ENCODE measurements at regions of chrX and their contacts with region 1.

Region 1: GRCh38 chrX:16670998-16671397 is 21.0 kb downstream of the S100G start:
- DNase-seq: peak; percentile 56
- H3K4me3 ChIP-seq: no peak overlapping the region
- H3K27ac ChIP-seq: no peak overlapping the region
- H3K4me1 ChIP-seq: no peaks in the 10 kb centered on the region
- H3K27me3 ChIP-seq: no peaks in the 10 kb centered on the region
- CTCF ChIP-seq: peak in 1 of 2 donors; percentile 14
- POLR2A ChIP-seq: no peak

Region 2: DNA sequence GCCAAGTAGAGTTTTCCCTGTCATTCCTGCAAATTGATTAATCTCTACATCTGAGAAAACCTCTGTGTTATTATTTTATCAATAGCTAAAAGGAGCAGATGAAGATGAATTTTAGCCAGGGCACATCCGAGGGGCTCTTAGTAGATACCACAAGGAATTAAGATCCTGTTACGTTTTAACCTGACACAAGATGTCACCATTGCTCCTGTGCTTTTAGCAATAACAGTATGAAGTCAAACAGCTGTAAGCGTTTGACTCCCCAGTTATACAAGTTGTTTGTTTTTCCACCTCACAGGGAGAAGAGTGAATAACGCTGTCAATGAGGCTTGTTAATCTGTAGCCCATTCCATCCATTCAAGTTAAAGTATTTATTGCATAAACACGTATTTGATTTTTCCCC is 740.4 kb before region 1 on chrX:
- CTCF ChIA-PET with region 1: no interaction called
- POLR2A ChIA-PET with region 1: no interaction called
- dilution Hi-C with region 1: no loop called
- intact Hi-C with region 1: loop called (anchors 5 kb)
- DNase-seq: peak; percentile 36
- H3K4me3 ChIP-seq: no peak overlapping the region
- H3K27ac ChIP-seq: no peak overlapping the region
- H3K4me1 ChIP-seq: no peaks in the 10 kb centered on the region
- H3K27me3 ChIP-seq: peaks cover 0 to 3% of the 10 kb centered on the region in 2 experiments
- CTCF ChIP-seq: peak in 1 of 2 donors; percentile 4
- POLR2A ChIP-seq: no peak

Region 3: GRCh38 chrX:16123222-16123786 is 547.7 kb before region 1 on chrX and contains the start of gene GRPR:
- CTCF ChIA-PET with region 1: interaction called, 9 read pairs
- POLR2A ChIA-PET with region 1: no interaction called
- dilution Hi-C with region 1: no loop called
- intact Hi-C with region 1: loop called (anchors 2 kb)
- DNase-seq: peak; percentile 77
- H3K4me3 ChIP-seq: no peak within 1 kb of the TSS
- H3K27ac ChIP-seq: no peak within 1 kb of the TSS
- H3K4me1 ChIP-seq: no peaks in the 10 kb centered on the region
- H3K27me3 ChIP-seq: peaks cover 0 to 5% of the 10 kb centered on the region in 2 experiments
- CTCF ChIP-seq: peak; percentile 69 to 70
- POLR2A ChIP-seq: no peak
- total RNA-seq, gene GRPR: 0.28 TPM in 1 of 2 replicates, not detected in the other

Region 4: DNA sequence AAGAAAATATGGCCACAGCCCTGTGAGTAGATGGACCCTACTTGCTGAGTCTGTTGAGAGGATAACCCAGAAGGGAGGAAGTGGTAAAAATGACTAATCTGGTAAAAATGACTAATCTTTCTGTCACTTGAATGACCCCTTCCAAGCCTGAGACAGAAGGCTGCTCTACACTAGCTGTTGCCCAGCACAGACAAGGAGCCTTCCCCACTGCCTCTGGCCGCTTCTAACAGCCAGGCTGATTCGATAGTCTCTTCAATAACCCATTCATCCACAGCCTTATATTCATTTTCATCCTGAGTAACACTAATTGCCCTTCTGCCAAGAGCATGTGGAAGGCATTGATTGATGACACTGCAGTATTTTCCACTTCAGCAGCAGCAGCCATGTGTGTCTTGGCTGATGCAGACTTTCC is 485.3 kb before region 1 on chrX:
- CTCF ChIA-PET with region 1: no interaction called
- POLR2A ChIA-PET with region 1: no interaction called
- dilution Hi-C with region 1: no loop called
- intact Hi-C with region 1: loop called (anchors 10 kb)
- DNase-seq: peak; percentile 74
- H3K4me3 ChIP-seq: no peak overlapping the region
- H3K27ac ChIP-seq: no peak overlapping the region
- H3K4me1 ChIP-seq: peaks cover 31% of the 10 kb centered on the region
- H3K27me3 ChIP-seq: no peaks in the 10 kb centered on the region
- CTCF ChIP-seq: no peak
- POLR2A ChIP-seq: no peak

Region 5: GRCh38 chrX:16436348-16437188 is 234.4 kb before region 1 on chrX:
- CTCF ChIA-PET with region 1: interaction called, 38 read pairs
- POLR2A ChIA-PET with region 1: no interaction called
- dilution Hi-C with region 1: no loop called
- intact Hi-C with region 1: loop called (anchors 1 kb)
- DNase-seq: peak; percentile 54
- H3K4me3 ChIP-seq: no peak overlapping the region
- H3K27ac ChIP-seq: no peak overlapping the region
- H3K4me1 ChIP-seq: no peaks in the 10 kb centered on the region
- H3K27me3 ChIP-seq: no peaks in the 10 kb centered on the region
- CTCF ChIP-seq: peak; percentile 53 to 56
- POLR2A ChIP-seq: no peak

Region 6: DNA sequence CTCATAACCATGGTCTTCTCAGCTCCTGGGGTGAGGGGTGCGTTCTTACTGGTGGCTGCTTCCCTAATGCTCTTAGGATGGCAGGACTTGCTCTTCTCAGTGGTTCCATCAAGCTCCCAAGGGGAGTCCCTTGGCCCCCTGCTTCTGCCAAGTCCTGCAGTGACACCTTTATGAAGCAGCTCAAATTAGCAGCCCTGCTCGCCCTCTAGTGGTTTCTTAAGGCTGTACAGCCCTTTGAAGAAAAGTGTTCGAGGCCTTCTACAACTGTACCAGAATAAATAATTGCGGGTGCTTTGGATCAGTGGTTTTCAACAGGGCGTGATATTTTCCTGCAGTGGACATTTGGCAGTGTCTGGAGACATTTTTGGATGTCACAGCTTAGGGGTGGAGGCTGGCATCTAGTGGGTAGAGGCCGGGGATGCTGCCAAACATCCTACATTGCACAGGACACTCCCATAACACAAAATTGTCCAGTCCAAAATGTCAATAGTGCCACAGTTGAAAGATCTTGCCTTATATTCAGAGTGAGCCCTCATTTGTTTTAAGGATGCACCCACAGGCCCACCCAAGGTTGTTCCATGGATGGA is 225.7 kb before region 1 on chrX:
- CTCF ChIA-PET with region 1: interaction called, 22 read pairs
- POLR2A ChIA-PET with region 1: interaction called, 6 read pairs
- dilution Hi-C with region 1: no loop called
- intact Hi-C with region 1: no loop called
- DNase-seq: peak; percentile 17
- H3K4me3 ChIP-seq: no peak overlapping the region
- H3K27ac ChIP-seq: no peak overlapping the region
- H3K4me1 ChIP-seq: no peaks in the 10 kb centered on the region
- H3K27me3 ChIP-seq: no peaks in the 10 kb centered on the region
- CTCF ChIP-seq: peak; percentile 46 to 54
- POLR2A ChIP-seq: no peak

Measured in endothelial cell of umbilical vein (primary cell).